A549 (cell line): ENCODE measurements at regions of chr12 and their contacts with region 1.

Region 1: DNA sequence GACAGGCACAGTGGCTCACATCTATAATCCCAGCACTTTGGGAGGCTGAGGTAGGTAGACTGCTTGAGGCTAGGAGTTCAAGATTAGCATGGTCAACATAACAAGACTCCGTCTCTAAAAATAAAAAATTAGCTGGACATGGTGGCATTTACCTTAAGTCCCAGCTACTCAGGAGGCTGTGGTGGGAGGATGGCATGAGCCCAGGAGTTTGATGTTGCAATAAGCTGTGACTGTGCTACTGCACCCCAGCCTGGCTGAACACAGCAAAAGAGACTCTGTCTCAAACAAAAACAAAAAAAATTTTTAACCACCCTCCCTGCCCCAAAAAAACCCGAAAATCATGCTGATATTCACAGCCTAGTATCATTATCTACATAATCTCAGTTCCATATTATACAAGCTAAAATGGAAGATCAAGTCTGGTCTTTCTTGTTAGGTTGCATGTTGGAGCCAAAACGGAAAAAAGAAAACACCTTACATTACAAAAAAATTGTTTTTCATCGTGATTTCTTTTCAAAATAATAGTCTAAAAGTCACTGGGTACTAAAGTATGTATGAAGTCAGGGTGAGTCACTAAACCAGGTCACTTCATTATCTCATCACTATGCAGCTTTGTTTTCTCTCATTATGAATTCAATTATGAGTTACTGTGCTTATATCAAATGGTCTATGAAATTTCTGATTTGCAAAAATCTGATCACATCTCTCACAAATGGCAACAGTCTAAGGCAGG is 13.8 kb downstream of the GXYLT1 start:
- DNase-seq: no peak
- ATAC-seq: peak; percentile 28 to 69; a peak in 3 of 6 replicates
- H3K4me3 ChIP-seq: no peak overlapping the region
- H3K27ac ChIP-seq: peak overlapping the region; percentile 18 to 36; a peak in 2 of 6 replicates
- H3K4me1 ChIP-seq: peaks cover 57% of the 10 kb centered on the region
- CTCF ChIP-seq: no peak
- EP300 ChIP-seq: no peak
- POLR2A ChIP-seq: no peak
- RAD21 ChIP-seq: no peak

Region 2: DNA sequence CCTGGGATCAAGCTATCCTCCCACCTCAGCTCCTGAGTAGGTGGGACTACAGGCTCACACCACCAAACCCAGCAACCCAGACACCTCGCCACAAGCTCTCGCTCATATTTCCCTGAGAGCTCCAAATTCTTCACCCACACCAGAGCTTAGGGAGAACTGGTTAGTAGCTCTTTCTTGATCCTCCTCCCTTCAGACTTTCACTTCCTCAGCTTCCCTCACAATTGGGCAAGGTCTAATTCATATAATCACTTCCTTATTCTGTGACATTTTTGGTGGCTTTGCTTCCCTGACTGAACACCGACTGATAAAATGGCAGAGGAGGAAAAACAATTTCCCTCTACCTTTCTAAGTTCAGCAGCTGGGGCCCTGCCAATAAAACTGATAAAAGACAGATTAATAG is 74.7 kb before region 1 on chr12:
- CTCF ChIA-PET with region 1: no interaction called
- POLR2A ChIA-PET with region 1: no interaction called
- DNase-seq: no peak
- ATAC-seq: no peak
- H3K4me3 ChIP-seq: no peak overlapping the region
- H3K27ac ChIP-seq: no peak overlapping the region
- H3K4me1 ChIP-seq: no peaks in the 10 kb centered on the region
- CTCF ChIP-seq: no peak
- EP300 ChIP-seq: no peak
- POLR2A ChIP-seq: no peak
- RAD21 ChIP-seq: no peak

Region 3: DNA sequence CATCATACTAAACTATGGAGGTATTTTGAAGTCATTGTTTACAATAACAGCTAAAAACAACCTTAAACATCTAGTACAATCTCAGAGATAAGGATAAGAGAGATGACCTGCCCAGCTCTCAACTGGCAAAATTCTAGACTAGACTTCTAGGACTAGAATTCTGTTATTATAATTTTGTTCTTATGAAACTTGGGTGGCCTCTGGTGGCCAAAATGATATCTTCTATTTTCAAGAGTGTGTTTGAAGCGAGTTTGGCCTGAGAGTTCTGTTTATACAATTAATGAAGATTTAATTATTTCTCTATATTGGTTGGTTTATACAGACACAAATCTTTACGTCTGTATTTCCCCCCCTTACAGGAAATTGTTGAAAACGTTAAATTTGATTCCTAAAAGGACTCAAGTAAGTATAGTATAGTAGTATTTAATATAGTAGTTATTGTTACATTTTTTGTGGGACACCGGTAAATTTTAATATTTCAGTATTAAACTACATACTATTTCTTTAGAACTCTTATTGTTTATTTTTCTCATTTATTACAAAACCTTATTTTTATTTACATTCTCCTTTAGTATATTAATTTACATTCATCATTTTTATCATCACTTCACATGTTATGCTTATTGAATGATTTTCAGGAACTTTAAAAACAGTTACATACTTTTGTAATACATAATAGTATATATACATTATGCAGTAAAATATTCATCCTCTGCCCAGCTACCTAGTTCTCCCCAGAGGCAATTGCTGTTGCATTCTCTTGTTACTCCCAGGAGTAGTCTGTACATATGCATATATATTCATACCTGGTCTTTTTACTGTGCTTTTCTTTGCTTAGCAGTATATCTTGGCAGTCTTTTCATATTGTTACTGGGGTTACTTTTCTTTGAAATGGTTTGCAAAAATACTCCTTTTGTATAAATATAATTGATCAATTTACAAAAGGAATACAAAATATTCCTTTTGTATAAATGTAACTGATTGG is 201.8 kb after region 1 on chr12:
- CTCF ChIA-PET with region 1: interaction called, 13 read pairs
- POLR2A ChIA-PET with region 1: interaction called, 3 read pairs
- DNase-seq: peak; percentile 47 to 66
- ATAC-seq: peak; percentile 71 to 89; a peak in 5 of 6 replicates
- H3K4me3 ChIP-seq: no peak overlapping the region
- H3K27ac ChIP-seq: no peak overlapping the region
- H3K4me1 ChIP-seq: peaks cover 24% of the 10 kb centered on the region
- CTCF ChIP-seq: peak; percentile 87
- EP300 ChIP-seq: no peak
- POLR2A ChIP-seq: no peak
- RAD21 ChIP-seq: peak; percentile 84 to 87